ENCODE measurements at regions of chr16 and their contacts with region 1.

Region 1: GRCh38 chr16:1964506-1965395 is at the start of gene RPS2:
- DNase-seq: peak; percentile 94 to 99
- H3K4me3 ChIP-seq: peak within 1 kb of the TSS; percentile 83
- H3K27ac ChIP-seq: peak within 1 kb of the TSS; percentile 94
- H3K4me1 ChIP-seq: peaks cover 12% of the 10 kb centered on the region; the same call in 1 of the 2 replicates
- H3K27me3 ChIP-seq: no peaks in the 10 kb centered on the region
- CTCF ChIP-seq: no peak
- total RNA-seq, gene RPS2: 3,808 and 4,468 TPM in 2 replicates

Region 2: GRCh38 chr16:1300664-1301476 is 663.9 kb before region 1 on chr16:
- CTCF ChIA-PET with region 1: no interaction called
- POLR2A ChIA-PET with region 1: no interaction called
- intact Hi-C with region 1: no loop called
- DNase-seq: peak in 1 of 2 experiments; percentile 75
- H3K4me3 ChIP-seq: no peak overlapping the region
- H3K27ac ChIP-seq: no peak overlapping the region
- H3K4me1 ChIP-seq: peaks cover 56% of the 10 kb centered on the region
- H3K27me3 ChIP-seq: no peaks in the 10 kb centered on the region
- CTCF ChIP-seq: peak; percentile 71

Region 3: DNA sequence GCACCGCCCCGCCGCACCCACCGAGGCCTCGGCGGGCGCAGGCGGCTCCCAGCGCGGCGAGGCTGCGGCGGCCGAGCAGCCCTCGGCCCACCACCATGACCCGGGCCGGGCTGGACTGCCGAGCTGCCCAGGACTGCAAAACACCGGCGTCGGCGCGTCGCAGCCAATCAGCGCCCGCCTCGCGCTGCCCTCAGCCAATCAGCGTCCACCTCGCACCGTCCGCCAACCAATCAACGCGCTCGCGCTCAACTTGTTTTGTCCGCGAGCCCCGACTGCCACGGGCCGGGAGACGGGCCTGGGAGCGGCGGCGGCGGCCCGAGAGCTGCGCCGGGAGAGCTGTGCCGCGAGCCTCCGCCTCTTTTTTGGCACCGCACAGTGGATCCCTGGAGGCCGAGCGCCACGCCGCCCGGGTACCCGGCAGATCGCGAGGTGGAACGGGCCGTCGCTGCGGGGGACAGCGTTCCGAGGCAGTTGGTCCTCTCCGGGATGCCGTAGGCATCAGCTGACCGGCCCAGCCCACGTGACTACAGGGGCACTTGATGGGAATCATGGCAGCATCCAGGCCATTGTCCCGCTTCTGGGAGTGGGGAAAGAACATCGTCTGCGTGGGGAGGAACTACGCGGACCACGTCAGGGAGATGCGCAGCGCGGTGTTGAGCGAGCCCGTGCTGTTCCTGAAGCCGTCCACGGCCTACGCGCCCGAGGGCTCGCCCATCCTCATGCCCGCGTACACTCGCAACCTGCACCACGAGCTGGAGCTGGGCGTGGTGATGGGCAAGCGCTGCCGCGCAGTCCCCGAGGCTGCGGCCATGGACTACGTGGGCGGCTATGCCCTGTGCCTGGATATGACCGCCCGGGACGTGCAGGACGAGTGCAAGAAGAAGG is 137.8 kb before region 1 on chr16 and contains the starts of genes FAHD1 and HAGH:
- CTCF ChIA-PET with region 1: no interaction called
- POLR2A ChIA-PET with region 1: interaction called, 23 read pairs
- intact Hi-C with region 1: no loop called
- DNase-seq: peak; percentile 80 to 96
- H3K4me3 ChIP-seq: peak within 1 kb of the TSS; percentile 74
- H3K27ac ChIP-seq: 0 out of 2 replicates have a peak within 1 kb of the TSS, but pooled peaks have one; percentile 5
- H3K4me1 ChIP-seq: peaks cover 28% of the 10 kb centered on the region
- H3K27me3 ChIP-seq: no peaks in the 10 kb centered on the region
- CTCF ChIP-seq: no peak
- total RNA-seq, gene FAHD1: 26.8 and 41.2 TPM in 2 replicates
- total RNA-seq, gene HAGH: 51.8 and 74.5 TPM in 2 replicates

Region 4: GRCh38 chr16:1913327-1914083 is 51.2 kb before region 1 on chr16:
- CTCF ChIA-PET with region 1: no interaction called
- POLR2A ChIA-PET with region 1: interaction called, 15 read pairs
- intact Hi-C with region 1: no loop called
- DNase-seq: peak; percentile 72 to 80
- H3K4me3 ChIP-seq: no peak overlapping the region
- H3K27ac ChIP-seq: no peak overlapping the region
- H3K4me1 ChIP-seq: peaks cover 34% of the 10 kb centered on the region
- H3K27me3 ChIP-seq: 0 out of 2 replicates have a peak, but pooled peaks cover 5% of the 10 kb centered on the region
- CTCF ChIP-seq: no peak

Region 5: DNA sequence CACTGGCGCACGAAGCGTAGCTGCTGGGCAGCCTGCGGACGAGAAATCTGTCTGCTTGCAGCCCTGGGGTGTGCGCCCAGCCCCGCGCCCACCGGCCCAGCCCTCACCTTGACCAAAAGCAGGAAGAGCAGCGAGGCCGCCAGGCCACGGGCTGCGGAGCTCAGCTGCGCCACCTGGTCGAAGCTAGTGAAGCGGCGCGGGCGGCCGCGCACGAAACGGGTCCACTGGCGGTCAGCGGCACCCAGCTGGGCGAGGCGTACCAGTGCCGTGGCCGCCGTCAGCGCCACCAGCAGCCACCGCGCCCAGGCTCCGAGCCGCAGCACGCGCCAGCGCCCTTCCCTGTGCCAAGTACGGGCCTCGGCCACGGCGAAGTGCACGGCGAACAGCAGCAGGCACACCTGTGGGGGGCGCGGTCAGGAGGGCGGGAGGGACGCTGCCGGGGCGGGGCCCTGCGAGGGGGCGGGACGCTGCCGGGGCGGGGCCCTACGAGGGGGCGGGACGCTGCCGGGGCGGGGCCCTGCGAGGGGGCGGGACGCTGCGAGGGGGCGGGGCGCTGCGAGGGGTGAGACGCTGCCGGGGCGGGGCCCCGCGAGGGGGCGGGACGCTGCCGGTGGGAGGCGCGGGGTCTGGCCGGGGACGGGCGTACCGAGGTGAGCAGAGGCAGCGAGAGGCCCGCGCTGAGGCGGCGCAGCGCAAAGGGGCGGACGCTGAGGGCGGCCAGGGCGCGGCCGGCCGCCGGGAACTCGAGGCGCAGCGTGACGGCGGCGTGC is 126.2 kb after region 1 on chr16:
- CTCF ChIA-PET with region 1: no interaction called
- POLR2A ChIA-PET with region 1: interaction called, 17 read pairs
- intact Hi-C with region 1: no loop called
- DNase-seq: peak; percentile 62 to 98
- H3K4me3 ChIP-seq: peak overlapping the region; percentile 45; the same call in 1 of the 2 replicates
- H3K27ac ChIP-seq: no peak overlapping the region
- H3K4me1 ChIP-seq: no peaks in the 10 kb centered on the region; the same call in 1 of the 2 replicates
- H3K27me3 ChIP-seq: no peaks in the 10 kb centered on the region
- CTCF ChIP-seq: peak; percentile 55; the same call in 1 of the 2 replicates